Activated CD4-positive, alpha-beta T cell treated with anti-CD3 and anti-CD28 coated beads, Interleukin-2, amount 10 ng/mL, durations not matched to agents 7 days and 5 days (primary cell): ENCODE measurements at regions of chr2 and their contacts with region 1.

Region 1: DNA sequence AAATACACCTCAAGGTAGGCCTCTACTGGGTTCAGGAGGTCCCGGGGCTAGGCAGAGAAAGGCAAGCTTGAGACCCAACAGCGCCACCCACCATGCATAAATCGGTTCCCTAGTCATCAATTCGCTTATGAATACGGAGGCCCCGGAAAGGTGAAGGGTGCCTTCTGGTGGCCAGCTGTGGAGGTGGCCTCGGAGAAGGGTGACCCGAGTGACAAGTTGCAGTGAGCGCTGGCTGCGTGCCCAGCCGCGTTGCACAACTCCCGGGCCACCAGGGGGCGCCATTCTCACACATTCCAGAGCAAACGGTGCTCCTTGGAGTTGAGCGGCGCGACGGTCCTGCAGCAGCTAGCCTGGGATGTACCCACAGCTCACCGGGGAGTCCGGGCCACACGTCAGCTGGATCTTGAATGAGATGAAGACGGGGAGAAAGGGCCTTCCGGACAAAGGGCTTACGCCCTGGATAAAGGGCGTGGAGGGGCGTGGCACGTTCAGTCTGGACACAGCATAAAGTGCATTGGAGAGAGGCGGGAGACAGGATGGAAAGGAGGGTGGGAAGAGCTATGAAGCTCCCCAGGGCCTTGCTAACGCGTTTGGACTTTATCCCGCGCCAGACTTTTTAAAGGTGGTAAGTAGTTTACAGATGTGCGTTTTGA is 20.4 kb downstream of the TMSB10 start:
- DNase-seq: peak; percentile 98
- H3K4me3 Mint-ChIP-seq: peak overlapping the region; percentile 79
- H3K27ac Mint-ChIP-seq: peak overlapping the region; percentile 90
- H3K4me1 Mint-ChIP-seq: peaks cover 53% of the 10 kb centered on the region
- H3K27me3 Mint-ChIP-seq: no peaks in the 10 kb centered on the region

Region 2: DNA sequence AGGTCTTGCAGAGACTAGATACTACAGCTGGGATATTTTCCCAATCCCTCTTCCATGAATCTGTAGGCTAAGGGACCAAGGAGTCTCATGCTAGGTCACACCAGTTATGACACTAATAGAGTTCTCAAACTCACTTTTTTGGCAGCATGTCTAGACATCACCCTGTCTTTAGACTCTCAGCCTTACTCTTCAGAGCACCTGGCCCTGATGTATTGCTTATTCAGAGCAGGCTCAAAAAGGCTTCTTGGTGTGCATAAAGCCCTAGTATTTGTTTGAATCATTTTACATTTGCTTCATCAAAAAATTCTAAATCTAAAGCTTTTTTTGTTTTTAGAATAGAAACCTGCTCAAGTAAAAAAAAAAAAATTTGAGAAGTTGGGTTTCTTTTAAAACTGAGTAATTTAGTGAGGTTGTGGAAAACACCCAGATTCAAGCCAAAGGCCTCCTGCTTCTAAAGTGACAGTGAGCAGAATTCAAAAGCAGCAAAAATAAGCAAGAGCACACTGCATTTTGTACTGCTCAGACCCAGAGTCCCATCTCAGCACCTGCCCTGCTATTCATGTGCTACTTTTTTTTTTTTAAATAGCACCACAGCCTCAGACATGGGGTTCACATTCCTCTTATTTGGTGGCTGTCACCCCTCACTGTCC is 427.6 kb before region 1 on chr2:
- CTCF ChIA-PET with region 1: interaction called, 25 read pairs
- POLR2A ChIA-PET with region 1: no interaction called
- DNase-seq: no peak
- H3K4me3 Mint-ChIP-seq: no peak overlapping the region
- H3K27ac Mint-ChIP-seq: no peak overlapping the region
- H3K4me1 Mint-ChIP-seq: peaks cover 10% of the 10 kb centered on the region
- H3K27me3 Mint-ChIP-seq: no peaks in the 10 kb centered on the region

Region 3: DNA sequence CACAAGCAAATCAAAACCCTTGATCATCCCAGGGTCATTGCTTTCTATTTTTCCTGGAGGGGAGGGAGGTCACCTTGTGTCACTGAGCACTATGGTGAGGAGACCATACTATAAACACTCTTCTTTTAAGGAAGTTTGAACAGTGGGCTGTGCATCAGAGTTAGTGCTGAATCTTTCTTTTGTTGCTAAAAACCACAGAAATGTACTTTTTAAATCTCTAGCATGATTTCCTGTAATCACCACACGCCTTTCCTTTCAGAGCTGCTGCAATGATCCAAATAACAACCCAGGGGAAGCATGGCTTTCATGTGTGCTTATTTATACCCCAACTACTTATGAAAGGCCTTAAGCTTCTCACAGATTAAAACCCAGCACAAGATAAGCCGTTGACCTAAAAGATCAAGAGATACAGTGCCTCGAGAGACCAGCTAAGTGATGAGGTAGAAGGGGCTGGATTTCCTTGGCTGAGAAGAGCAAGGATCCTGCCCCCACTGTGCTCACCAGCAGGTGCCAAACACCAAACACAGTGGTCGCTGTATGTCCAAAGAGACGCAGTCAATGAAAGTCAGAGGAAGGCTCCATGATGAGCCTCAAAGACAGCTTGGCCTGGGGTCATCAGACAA is 79.7 kb before region 1 on chr2:
- CTCF ChIA-PET with region 1: interaction called, 12 read pairs
- POLR2A ChIA-PET with region 1: no interaction called
- DNase-seq: peak; percentile 76
- H3K4me3 Mint-ChIP-seq: peak overlapping the region; percentile 43
- H3K27ac Mint-ChIP-seq: peak overlapping the region; percentile 95
- H3K4me1 Mint-ChIP-seq: peaks cover 91% of the 10 kb centered on the region
- H3K27me3 Mint-ChIP-seq: no peaks in the 10 kb centered on the region

Region 4: GRCh38 chr2:84881581-84882414 is 44.1 kb before region 1 on chr2:
- CTCF ChIA-PET with region 1: interaction called, 69 read pairs
- POLR2A ChIA-PET with region 1: interaction called, 7 read pairs
- DNase-seq: peak; percentile 90
- H3K4me3 Mint-ChIP-seq: peak overlapping the region; percentile 97
- H3K27ac Mint-ChIP-seq: peak overlapping the region; percentile 98
- H3K4me1 Mint-ChIP-seq: peaks cover 65% of the 10 kb centered on the region
- H3K27me3 Mint-ChIP-seq: no peaks in the 10 kb centered on the region

Region 5: DNA sequence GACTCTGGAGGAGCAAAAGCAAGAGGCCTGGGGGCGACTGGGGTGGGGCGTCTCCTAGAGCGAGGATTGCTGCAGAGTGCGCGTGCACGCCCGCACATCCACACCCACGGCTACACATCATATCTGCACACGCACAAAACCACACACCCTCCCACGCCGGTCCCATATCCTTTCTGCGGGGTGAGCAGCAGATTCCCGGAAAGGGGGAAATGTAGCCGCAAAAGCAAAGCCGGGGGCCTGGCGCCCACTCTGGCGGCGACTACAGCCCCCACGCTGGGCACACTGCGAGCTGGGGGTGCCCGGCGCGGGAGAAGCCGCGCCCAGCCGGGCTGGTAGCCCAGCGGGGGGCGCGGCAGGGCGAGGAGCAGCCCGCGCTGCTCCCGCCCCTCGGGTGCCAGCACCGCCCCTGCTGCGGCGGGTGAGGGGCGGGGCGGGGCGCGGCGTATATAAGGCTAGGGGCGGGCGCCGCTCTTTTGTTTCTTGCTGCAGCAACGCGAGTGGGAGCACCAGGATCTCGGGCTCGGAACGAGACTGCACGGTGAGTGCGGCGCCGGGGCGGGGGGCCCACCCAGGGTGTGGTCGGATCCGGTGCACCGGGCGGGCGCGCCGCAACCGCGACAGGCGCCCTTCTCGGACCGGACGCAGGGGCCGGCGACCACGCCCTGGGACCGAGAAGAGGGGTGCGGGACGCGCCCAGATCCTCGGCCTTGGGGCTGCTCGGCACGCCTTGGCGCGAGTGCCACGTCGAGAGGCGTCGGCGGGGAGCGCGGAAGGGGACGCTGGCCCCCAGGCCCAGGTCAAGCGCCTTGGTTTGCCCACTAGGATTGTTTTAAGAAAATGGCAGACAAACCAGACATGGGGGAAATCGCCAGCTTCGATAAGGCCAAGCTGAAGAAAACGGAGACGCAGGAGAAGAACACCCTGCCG is 20.4 kb before region 1 on chr2 and contains the start of gene TMSB10:
- CTCF ChIA-PET with region 1: interaction called, 71 read pairs
- POLR2A ChIA-PET with region 1: interaction called, 21 read pairs
- DNase-seq: peak; percentile 90
- H3K4me3 Mint-ChIP-seq: peak within 1 kb of the TSS; percentile 91
- H3K27ac Mint-ChIP-seq: peak within 1 kb of the TSS; percentile 96
- H3K4me1 Mint-ChIP-seq: peaks cover 71% of the 10 kb centered on the region
- H3K27me3 Mint-ChIP-seq: no peaks in the 10 kb centered on the region
- total RNA-seq, gene TMSB10: 5,491 to 5,845 TPM

Region 6: GRCh38 chr2:84970868-84971509 is 45.1 kb after region 1 on chr2 and contains the start of gene KCMF1:
- CTCF ChIA-PET with region 1: interaction called, 21 read pairs
- POLR2A ChIA-PET with region 1: no interaction called
- DNase-seq: peak; percentile 70
- H3K4me3 Mint-ChIP-seq: peak within 1 kb of the TSS; percentile 100
- H3K27ac Mint-ChIP-seq: peak within 1 kb of the TSS; percentile 100
- H3K4me1 Mint-ChIP-seq: peaks cover 51% of the 10 kb centered on the region
- H3K27me3 Mint-ChIP-seq: no peaks in the 10 kb centered on the region
- total RNA-seq, gene KCMF1: 74.7 to 75.7 TPM